Psoas muscle (tissue), 8 donors: ENCODE measurements at regions of chr17 and their contacts with region 1.

Region 1: DNA sequence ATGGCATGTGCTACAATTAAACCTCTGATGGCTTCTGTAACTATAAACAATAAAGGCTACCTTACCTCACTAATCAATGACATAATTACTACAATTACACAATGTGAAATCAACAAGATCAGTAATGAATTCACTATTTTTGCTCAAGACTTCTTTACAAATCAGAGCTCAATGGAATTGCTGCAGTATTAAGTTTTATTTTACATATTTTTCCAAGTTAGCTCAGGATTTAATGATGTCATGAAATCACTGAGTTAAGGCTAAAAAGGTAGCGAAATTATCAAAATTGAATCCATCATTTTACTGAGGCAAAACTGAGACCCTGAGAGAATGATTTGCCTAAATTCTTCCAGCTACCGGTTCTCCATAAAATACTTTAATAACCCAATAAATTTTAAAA is 21.8 kb downstream of the ABCA5 start:
- DNase-seq: no peak
- ATAC-seq: no peak
- H3K4me3 ChIP-seq: no peak overlapping the region
- H3K27ac ChIP-seq: no peak overlapping the region
- H3K4me1 ChIP-seq: no peaks in the 10 kb centered on the region
- H3K27me3 ChIP-seq: no peaks in the 10 kb centered on the region
- CTCF ChIP-seq: no peak

Region 2: DNA sequence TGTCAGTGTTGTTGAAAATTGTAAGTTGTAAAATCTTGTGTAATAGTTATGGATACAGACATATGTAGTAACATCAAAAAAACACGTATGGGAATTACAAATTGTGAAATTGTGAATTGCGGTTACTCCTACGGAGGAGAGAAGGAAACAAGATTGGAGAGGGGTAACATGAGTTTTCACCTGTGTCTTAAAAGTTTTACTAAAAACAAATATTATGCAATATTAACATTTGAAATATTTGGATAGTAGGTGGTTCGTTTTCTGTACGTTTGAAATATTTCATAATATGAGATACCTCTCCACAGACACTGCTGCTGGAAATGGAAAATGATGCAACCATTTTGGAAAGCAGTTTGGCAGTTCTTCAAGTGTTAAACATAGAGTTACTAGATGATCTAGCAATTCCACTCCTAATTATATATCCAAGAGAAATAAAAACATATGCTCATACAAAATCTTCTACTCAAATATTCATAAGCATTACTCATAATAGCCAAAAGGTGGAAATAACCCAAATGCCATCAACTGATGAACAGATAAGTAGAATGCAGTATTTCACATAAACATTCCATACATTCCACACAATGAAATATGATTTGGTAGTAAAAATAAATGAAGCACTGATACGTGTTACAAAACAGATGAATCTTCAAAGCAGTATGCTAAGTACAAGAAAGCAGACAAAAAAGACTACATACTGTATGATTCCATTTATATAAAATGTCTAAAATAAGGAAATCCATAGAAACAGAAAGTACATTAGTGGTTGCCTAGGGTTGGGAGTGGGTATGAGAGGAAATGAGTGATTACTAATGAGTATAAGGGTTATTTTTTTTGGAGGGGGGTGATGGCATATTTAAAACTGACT is 35.8 kb before region 1 on chr17:
- intact Hi-C with region 1: loop called in 1 of 2 experiments (anchors 5 kb)
- DNase-seq: no peak
- ATAC-seq: peak; percentile 50 to 88 (median 82)
- H3K4me3 ChIP-seq: peak overlapping the region; percentile 12
- H3K27ac ChIP-seq: peak overlapping the region; percentile 50
- H3K4me1 ChIP-seq: peaks cover 23% of the 10 kb centered on the region
- H3K27me3 ChIP-seq: no peaks in the 10 kb centered on the region
- CTCF ChIP-seq: no peak